ACHN (cell line): ENCODE measurements at regions of chr6 and their contacts with region 1.

Region 1: DNA sequence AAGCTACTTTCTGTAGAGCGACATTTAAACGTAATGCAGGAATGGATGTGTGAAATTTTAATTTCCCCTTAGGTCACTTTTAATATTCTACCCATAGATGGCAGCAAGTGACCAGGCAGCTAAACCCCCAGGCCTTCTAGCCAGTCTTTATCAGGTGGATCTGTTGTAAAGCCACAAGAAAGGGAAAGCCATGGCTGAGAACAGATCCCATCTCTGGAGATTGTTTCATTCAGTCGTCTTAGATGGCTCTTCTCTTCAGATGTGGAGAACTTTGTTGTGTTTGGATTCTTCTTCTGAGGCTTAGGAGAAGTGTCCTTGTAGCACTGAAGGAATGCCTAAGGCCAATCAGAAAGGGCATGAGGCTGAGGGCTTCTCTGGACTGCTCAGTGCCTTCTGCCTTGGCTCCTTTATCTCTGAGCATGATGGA is 15.8 kb upstream of the RNF182 start:
- DNase-seq: peak; percentile 63

Region 2: GRCh38 chr6:13668291-13668928 is 240.6 kb before region 1 on chr6:
- in situ Hi-C with region 1: no loop called
- DNase-seq: peak; percentile 37

Region 3: DNA sequence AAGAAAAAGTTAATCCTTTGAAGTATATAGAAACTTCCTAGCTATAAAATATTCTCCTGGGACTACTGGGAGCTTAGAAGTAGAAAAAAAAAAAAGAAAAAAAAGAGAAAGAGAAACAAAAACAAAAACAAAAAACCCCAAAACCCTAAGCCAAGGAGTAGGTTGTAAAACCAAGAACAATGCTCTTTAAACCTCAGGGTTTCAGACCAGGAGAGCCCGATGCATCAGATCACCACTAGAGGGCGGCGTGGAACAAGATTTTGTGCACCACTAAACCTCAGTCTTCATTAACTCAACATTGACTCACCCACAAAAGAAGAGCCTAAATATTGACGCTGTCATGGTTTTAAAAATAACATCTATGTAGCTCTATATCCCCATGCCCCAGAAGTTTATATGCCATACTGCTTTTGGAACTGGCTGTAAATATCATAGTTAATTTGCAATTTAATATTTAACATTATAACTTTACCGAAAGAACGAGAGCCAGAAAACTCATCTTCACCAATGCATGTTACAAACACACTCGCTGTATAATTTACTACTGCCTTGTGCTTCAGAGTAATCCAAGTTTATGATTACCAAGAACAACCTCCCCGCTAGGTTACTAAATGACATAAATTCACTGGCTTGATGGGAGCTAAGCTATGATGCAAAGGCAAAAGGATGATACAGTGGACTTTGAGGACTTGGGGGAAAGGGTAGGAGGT is 113.8 kb before region 1 on chr6:
- in situ Hi-C with region 1: no loop called
- DNase-seq: peak; percentile 84

Region 4: DNA sequence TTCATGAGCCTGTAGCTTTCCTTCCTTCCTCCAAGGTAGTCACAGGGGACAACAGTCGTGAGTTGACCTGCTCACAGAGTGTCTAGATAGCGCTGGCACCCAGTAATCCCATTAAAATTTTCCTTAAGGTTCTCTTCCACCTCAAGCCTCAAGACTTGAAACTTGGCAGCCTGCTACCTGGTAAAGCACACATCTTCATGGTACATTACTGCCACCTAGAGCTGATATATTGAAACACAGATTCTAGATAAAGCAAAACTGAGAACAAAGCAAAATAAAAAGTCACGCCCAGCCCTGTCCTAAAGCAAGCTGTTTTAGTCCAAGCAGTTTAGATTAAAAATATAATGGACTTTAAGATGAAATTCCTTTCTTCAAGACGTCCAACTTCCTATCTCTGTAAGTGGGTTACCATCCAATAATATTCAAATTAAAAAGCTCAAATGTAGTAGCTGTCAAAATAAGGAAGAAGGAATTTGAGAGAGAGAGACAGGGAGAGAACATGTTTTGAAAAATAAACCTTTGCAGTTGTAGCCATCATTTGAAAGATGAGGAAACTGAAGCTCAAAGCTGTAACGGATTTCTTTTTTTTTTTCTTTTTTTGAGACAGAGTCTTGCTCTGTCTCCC is 157.9 kb after region 1 on chr6:
- in situ Hi-C with region 1: loop called (anchors 25 kb)
- DNase-seq: peak; percentile 67

Region 5: GRCh38 chr6:14117158-14118090 is 208.5 kb after region 1 on chr6 and contains the start of gene CD83:
- in situ Hi-C with region 1: no loop called
- DNase-seq: peak; percentile 57